WTC11 (cell line): ENCODE measurements at regions of chr1 and their contacts with region 1.

Region 1: DNA sequence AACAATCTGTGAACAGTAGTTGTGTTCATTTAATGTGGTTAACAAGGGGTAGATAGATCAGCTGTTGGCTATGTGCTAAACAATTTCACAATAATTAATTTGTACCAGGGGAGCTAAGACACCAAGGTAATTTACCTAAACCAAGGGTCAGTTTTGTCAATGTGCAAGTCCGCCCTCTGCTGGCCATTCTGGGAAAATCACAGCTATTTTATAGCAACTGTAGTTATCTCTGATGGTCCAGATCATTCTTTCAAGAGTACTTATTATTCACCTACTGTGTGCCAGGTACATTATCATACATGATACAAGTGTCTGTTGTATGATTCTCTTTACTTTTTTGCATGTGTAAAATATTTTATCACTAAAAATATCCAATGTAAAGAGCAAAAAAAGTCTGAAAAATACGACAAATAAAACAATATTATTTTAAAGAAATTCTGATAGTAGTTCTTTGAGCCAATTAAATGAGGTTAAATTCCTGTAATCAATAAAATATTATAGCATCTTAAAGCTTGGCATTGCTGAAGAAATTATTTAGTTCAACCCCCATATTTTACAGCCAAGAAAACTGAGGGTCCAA is 312.3 kb upstream of the FAM78B start:
- DNase-seq: peak; percentile 66
- ATAC-seq: no peak
- H3K4me3 Mint-ChIP-seq: no peak overlapping the region
- H3K27ac Mint-ChIP-seq: no peak overlapping the region
- H3K4me1 Mint-ChIP-seq: peaks cover 12% of the 10 kb centered on the region
- H3K27me3 Mint-ChIP-seq: no peaks in the 10 kb centered on the region; the same call in 1 of the 2 replicates
- CTCF ChIP-seq: peak; percentile 78

Region 2: GRCh38 chr1:166383137-166383536 is 96.0 kb before region 1 on chr1:
- CTCF ChIA-PET with region 1: interaction called, 10 read pairs
- POLR2A ChIA-PET with region 1: no interaction called
- DNase-seq: peak; percentile 11
- ATAC-seq: peak; percentile 76
- H3K4me3 Mint-ChIP-seq: peak overlapping the region; percentile 20; the same call in 1 of the 2 replicates
- H3K27ac Mint-ChIP-seq: no peak overlapping the region
- H3K4me1 Mint-ChIP-seq: peaks cover 44% of the 10 kb centered on the region
- H3K27me3 Mint-ChIP-seq: peaks cover 58% of the 10 kb centered on the region
- CTCF ChIP-seq: no peak